Activated naive CD4-positive, alpha-beta T cell treated with anti-CD3 and anti-CD28 coated beads for 36 hours (primary cell): ENCODE measurements at regions of chr1 and their contacts with region 1.

Region 1: GRCh38 chr1:63367215-63368103 is at the start of gene ALG6:
- DNase-seq: peak; percentile 91
- H3K4me3 Mint-ChIP-seq: peak within 1 kb of the TSS; percentile 83
- H3K27ac Mint-ChIP-seq: peak within 1 kb of the TSS; percentile 65
- H3K4me1 Mint-ChIP-seq: peaks cover 21% of the 10 kb centered on the region
- H3K27me3 Mint-ChIP-seq: peaks cover 3% of the 10 kb centered on the region
- total RNA-seq, gene ALG6: 11.0 to 13.5 TPM

Region 2: DNA sequence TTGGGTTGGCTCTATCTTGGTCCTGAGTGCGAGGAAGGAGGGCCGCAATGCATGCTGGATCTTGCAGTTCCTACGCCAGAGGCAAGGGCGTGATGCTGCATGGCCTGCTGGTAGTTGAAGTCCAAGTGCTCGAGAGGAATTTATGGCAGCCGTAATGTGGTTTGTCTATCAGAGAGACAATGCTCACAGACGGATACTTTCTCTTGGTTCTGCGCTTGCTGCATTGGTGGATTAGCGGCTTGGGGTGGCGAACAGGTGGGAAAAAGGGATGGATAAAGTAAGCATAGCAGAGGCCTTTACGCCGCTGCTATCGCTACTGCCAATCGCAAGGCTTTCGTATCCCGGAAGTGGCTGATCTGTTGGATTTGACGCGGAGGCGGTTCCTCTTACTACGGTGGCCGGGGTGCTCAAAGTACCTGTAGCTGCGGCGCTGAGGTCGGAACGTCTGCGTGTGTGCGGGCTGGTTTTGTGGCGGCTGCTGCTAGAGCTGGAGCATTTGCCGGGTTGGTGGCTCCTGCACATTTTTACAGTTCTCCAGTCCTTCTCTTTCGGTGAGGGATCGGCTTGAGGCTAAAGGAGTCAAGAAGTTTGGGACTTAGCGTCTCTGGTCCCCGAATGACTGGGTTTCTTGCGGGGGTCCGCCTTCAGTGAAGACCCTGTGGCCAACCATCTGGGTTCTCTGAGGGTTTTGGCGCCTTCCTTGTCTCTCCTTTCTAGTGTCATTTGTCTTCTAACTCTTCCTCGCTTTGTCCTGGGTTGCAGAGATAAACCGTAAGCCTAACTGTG is 583.5 kb before region 1 on chr1 and contains the start of gene ATG4C:
- CTCF ChIA-PET with region 1: no interaction called
- intact Hi-C with region 1: loop called (anchors 1 kb)
- DNase-seq: peak; percentile 96
- H3K4me3 Mint-ChIP-seq: no peak within 1 kb of the TSS
- H3K27ac Mint-ChIP-seq: no peak within 1 kb of the TSS
- H3K4me1 Mint-ChIP-seq: peaks cover 13% of the 10 kb centered on the region
- H3K27me3 Mint-ChIP-seq: peaks cover 7% of the 10 kb centered on the region
- total RNA-seq, gene ATG4C: 13.4 to 15.1 TPM

Region 3: DNA sequence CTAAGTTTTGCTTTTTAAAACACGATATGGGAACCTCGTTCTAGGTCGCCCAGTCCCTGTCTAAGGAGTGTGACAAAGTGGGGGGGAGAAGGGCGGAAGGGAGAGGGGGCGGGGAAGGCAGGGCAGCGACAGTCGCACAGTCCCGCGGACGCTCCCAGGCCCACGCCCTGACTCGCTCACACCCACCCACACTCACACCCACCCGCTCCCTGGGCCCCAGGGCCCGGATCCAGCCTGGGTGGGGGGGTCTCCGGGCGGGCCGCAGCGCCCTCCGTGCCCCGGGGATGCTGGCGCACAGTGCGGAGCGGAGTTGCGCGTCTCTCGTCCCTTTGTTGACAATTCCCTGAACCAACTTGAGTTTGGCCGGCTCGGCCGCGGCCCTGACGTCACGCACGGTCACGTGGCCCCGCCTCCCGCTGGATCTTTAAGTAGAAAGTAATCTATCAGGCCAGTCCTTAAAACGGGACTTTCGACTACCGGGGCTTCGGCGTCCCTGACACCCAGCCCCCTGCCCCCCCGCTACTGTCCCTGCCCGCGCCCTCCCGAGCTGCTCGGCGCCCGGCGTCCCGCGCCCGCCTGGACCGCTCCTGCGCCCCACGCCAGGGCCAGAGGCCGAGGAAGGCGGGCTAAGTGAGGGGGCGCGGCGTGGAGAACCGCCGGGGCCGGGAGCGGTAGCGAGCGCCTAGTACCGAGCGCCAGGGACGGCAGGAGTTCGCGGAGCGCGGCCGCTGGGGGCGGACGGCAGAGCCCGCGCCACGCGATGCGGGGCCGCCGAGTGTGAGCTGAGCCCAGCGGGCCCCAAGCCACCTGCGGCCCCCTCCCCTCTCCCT is 45.1 kb before region 1 on chr1 and contains the start of gene FOXD3:
- CTCF ChIA-PET with region 1: no interaction called
- intact Hi-C with region 1: loop called (anchors 1 kb)
- DNase-seq: peak; percentile 44
- H3K4me3 Mint-ChIP-seq: peak within 1 kb of the TSS; percentile 77
- H3K27ac Mint-ChIP-seq: peak within 1 kb of the TSS; percentile 54
- H3K4me1 Mint-ChIP-seq: peaks cover 44% of the 10 kb centered on the region
- H3K27me3 Mint-ChIP-seq: peaks cover 71% of the 10 kb centered on the region
- total RNA-seq, gene FOXD3: not detected